Activated T-helper 1 cell treated with anti-CD3 and anti-CD28 coated beads, Interleukin-12 subunit alpha, Interleukin-12 subunit beta, Interleukin-2, Interleukin-4 antibody, amounts not matched to agents 30 ng/mL and 10 ng/mL and 1 ng/mL, durations not matched to agents 14 hours and 24 hours and 36 hours (primary cell): ENCODE measurements at regions of chr3 and their contacts with region 1.

Region 1: DNA sequence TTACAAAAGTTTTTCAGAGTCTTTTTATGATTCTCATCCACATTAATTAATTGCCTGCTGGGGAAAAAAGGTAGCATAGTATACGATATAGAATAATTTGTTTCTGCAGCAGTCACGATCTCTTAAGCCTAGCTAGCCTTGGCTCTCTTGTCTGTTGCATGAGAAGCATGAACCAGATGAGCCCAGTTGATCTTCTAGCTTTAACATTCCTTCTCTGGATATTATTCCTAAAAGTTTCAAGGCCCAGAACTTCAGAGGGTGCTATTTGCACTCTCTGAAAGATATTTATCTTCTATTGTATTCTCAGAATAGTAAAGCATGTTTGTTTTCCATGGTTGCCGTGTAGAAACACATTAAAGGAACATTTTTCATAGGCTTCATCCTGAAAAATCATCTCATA is 69.3 kb downstream of the BTLA start:
- DNase-seq: no peak
- H3K4me3 Mint-ChIP-seq: no peak overlapping the region
- H3K27ac Mint-ChIP-seq: no peak overlapping the region
- H3K4me1 Mint-ChIP-seq: peaks cover 17% of the 10 kb centered on the region
- H3K27me3 Mint-ChIP-seq: peaks cover under 1% of the 10 kb centered on the region

Region 2: GRCh38 chr3:111539351-111540331 is 890.3 kb before region 1 on chr3:
- intact Hi-C with region 1: no loop called
- DNase-seq: peak; percentile 36
- H3K4me3 Mint-ChIP-seq: peak overlapping the region; percentile 77
- H3K27ac Mint-ChIP-seq: peak overlapping the region; percentile 80
- H3K4me1 Mint-ChIP-seq: peaks cover 75% of the 10 kb centered on the region
- H3K27me3 Mint-ChIP-seq: no peaks in the 10 kb centered on the region

Region 3: DNA sequence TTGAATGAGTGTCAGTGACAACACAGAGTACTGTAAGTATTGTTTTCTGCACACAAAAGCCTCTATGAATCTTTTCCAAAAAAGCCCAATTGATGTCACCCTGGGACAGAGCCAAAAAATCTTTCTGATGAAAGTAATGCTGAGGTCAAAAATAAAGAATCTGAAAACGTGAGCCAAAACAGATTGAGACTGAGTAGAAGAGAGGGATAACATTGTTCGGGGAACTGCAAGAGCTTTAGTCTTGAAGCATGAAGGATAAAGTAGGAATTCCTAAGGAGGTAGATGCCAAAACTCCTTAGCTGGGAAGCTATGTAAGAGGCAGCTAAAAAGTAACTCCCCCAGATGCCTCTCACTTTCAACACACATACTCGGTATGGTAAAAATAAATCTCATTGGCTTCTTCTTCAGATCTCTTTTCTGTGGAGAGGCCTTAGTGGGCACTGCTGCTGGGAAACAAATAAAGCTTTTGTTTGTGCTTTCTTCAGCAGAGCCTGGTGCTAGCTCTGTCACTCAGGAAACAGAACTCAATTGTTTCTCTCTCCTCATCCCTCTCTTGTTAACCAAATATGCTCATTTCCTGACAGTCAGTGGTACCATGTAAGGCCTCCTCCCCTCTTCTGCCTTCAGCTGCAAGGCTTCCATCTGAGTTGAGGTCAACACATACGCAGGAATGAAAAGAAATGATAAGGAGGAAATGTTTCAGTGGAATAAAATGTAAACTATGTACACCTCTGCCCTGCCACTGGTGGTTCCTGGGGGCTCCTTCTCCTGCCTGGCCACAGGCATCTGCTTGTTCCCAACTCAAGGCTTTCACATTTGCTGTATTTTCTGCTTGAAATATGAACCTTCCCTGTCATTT is 38.9 kb before region 1 on chr3:
- intact Hi-C with region 1: loop called (anchors 5 kb)
- DNase-seq: peak; percentile 8
- H3K4me3 Mint-ChIP-seq: no peak overlapping the region
- H3K27ac Mint-ChIP-seq: peak overlapping the region; percentile 84
- H3K4me1 Mint-ChIP-seq: peaks cover 50% of the 10 kb centered on the region
- H3K27me3 Mint-ChIP-seq: no peaks in the 10 kb centered on the region

Region 4: GRCh38 chr3:112550859-112551258 is 120.9 kb after region 1 on chr3:
- intact Hi-C with region 1: no loop called
- DNase-seq: no peak
- H3K4me3 Mint-ChIP-seq: no peak overlapping the region
- H3K27ac Mint-ChIP-seq: no peak overlapping the region
- H3K4me1 Mint-ChIP-seq: peaks cover 22% of the 10 kb centered on the region
- H3K27me3 Mint-ChIP-seq: no peaks in the 10 kb centered on the region